Mammary epithelial cell (primary cell): ENCODE measurements at regions of chr2 and their contacts with region 1.

Region 1: DNA sequence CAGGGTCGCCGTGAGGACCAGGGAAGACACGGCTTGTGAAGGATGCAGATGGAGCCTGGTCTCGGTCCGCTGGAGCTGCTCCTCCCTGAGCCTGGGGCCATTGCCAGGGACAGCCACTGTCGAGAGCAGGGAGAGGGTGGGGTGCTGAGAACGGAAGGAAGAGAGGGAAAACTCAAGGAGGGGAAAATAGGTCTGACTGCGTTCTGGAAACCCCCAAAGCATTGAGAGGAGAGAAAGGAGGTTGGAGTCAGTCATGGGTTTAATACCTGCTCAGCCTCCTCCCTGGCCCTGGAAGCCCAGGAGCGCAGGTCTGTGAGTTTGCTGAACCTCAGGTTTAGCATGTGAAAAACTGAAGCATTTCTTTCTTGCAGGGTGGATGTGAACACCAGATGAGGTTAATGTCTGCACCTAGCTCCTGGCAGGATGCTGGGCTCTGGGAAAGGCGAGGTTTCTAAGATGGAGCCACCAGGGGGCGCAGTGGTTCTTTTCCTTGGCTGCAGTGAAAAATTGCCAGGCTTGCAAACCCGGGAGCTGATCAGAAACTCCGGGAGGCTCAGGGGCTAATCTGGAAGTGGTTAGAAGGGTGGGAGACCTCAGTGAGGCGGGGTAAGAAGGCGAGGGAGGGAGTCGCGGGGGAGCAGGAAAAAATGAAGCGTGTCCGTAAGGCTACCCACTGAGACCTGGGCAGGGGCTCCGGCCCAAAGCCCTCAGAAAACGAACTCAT is 33.6 kb upstream of the RNF149 start:
- DNase-seq: peak; percentile 52
- H3K4me3 ChIP-seq: no peak overlapping the region
- H3K27ac ChIP-seq: no peak overlapping the region
- H3K4me1 ChIP-seq: no peaks in the 10 kb centered on the region
- H3K27me3 ChIP-seq: no peaks in the 10 kb centered on the region
- CTCF ChIP-seq: peak; percentile 80 to 84

Region 2: DNA sequence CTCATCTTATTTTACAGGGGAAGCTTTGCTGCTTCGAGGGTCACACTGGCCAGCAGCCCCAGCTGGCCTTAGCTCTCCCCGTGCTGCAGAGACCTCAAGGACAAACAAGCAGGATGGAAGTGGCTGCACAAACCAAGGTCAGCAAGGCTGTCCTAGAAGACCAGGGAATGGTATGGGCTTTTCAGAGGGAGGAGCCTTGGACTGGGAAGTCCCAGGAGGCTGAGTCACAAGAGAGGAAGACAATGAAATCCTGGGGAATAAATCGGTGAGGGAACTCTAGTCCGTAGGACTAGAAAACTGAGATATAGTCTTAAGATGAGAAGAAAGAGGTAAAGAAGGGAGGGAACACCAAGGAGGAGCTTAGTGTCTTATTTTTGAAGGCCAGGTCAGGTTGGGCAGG is 29.6 kb after region 1 on chr2:
- CTCF ChIA-PET with region 1: no interaction called
- dilution Hi-C with region 1: no loop called
- in situ Hi-C with region 1: no loop called
- intact Hi-C with region 1: no loop called
- DNase-seq: no peak
- H3K4me3 ChIP-seq: no peak overlapping the region
- H3K27ac ChIP-seq: no peak overlapping the region
- H3K4me1 ChIP-seq: no peaks in the 10 kb centered on the region
- H3K27me3 ChIP-seq: no peaks in the 10 kb centered on the region
- CTCF ChIP-seq: no peak

Region 3: DNA sequence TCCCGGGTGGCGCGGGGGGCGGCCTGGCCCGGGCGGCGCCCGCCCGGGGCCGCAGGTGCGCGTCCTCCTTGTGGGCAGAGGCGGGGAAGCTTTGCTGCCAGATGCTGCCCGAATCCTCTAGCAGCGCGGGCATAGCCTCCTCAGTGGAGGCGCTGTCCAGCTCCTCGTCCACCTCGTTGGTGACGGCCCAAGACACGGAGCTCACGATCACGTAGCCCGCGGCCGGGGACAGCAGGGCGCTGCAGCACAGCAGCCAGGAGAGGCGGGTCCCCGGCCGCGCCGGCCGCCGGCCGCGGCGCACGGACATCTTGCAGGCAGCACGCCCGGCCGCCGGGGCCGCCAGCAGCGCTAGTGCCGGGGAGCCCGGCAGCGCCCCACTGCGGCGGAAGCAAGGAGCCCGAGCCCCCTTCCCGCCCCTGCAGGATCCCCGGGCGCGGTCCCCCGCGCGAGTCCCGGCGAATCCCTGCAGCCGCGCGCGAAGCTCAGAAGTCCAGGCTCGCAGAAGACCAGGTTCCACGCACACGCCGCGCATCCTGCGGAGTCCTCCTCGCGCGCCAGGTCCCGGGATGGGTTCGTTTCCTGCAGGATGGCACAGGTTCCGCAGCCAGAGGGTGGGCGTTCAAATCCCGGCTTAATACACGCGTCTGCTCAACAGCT is 45.2 kb after region 1 on chr2 and contains the start of gene CREG2:
- CTCF ChIA-PET with region 1: interaction called, 21 read pairs
- dilution Hi-C with region 1: no loop called
- in situ Hi-C with region 1: no loop called
- intact Hi-C with region 1: loop called (anchors 1 kb)
- DNase-seq: peak; percentile 55
- H3K4me3 ChIP-seq: peak within 1 kb of the TSS; percentile 51 to 67 (median 59)
- H3K27ac ChIP-seq: no peak within 1 kb of the TSS
- H3K4me1 ChIP-seq: peaks cover 21% of the 10 kb centered on the region
- H3K27me3 ChIP-seq: no peaks in the 10 kb centered on the region
- CTCF ChIP-seq: peak; percentile 34 to 63
- total RNA-seq, gene CREG2: under 0.01 to 1.4 TPM

Region 4: GRCh38 chr2:101823347-101823791 is 481.3 kb after region 1 on chr2:
- CTCF ChIA-PET with region 1: no interaction called
- dilution Hi-C with region 1: no loop called
- in situ Hi-C with region 1: loop called in 1 of 2 experiments (anchors 10 kb)
- intact Hi-C with region 1: no loop called
- DNase-seq: peak; percentile 75
- H3K4me3 ChIP-seq: peak overlapping the region in 2 of 3 experiments; percentile 3 to 4
- H3K27ac ChIP-seq: peak overlapping the region; percentile 88
- H3K4me1 ChIP-seq: peaks cover 81% of the 10 kb centered on the region
- H3K27me3 ChIP-seq: no peaks in the 10 kb centered on the region
- CTCF ChIP-seq: peak; percentile 79 to 86

Region 5: DNA sequence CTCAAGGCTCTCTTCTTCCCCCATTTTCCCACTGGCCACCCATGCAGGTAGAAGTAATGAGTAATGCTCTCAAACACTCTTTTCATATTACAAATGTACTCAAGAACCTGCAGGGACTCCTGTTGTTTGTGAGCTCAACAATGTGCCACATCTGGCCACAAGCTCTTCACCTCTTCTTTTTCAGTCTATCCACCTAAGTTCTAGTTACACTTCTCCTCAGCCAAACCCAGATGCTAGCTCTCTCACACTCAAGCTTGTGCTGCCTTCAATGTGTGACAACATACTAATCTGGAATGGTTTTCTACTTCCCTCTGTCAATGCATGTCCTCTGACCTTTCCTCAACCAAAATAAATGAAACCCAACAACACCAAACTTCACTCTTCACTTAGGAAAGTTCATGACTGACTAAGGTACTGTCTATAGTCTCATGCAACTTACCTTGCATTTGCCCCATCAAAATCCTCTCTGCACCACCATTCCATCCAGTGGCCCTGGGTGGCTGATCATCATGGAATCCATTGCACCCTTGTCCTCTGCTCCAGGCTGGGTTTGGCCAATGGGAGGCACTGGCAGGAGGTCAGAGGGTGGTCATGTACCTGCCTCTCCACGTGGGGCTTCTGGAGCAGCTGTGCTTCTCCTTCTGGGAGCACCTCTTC is 1008.2 kb after region 1 on chr2:
- CTCF ChIA-PET with region 1: interaction called, 16 read pairs
- dilution Hi-C with region 1: no loop called
- in situ Hi-C with region 1: no loop called
- intact Hi-C with region 1: no loop called
- DNase-seq: no peak
- H3K4me3 ChIP-seq: no peak overlapping the region
- H3K27ac ChIP-seq: no peak overlapping the region
- H3K4me1 ChIP-seq: no peaks in the 10 kb centered on the region
- H3K27me3 ChIP-seq: no peaks in the 10 kb centered on the region
- CTCF ChIP-seq: no peak

Region 6: GRCh38 chr2:102449370-102449974 is 1107.4 kb after region 1 on chr2:
- CTCF ChIA-PET with region 1: no interaction called
- dilution Hi-C with region 1: no loop called
- in situ Hi-C with region 1: no loop called
- intact Hi-C with region 1: loop called (anchors 5 kb)
- DNase-seq: peak; percentile 28
- H3K4me3 ChIP-seq: no peak overlapping the region
- H3K27ac ChIP-seq: no peak overlapping the region
- H3K4me1 ChIP-seq: no peaks in the 10 kb centered on the region
- H3K27me3 ChIP-seq: no peaks in the 10 kb centered on the region
- CTCF ChIP-seq: peak; percentile 57 to 68